ENCODE measurements at regions of chr14 and their contacts with region 1.

Region 1: GRCh38 chr14:55588259-55588699 is 8.3 kb downstream of the KTN1 start:
- DNase-seq: no peak
- CTCF ChIP-seq: no peak

Region 2: DNA sequence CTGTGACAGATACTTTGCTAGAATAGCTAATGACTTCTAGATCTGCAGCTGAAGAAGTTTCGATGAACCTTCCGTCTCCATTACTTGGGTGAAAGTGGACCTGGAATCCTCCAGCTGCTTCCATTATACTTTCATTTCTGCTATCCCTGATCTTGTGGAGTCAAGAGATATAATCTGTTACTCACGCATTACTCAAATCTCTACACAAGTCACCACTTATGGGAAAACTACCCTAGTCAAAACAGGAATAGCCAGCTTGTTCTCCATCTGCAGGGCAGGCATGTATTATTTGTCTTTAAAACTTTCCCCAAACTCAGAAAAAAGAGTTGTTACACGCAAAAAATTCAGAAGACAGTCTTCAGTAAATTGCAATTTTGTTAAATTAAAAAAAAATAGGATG is 11.1 kb before region 1 on chr14:
- CTCF ChIA-PET with region 1: interaction called, 10 read pairs
- POLR2A ChIA-PET with region 1: no interaction called
- DNase-seq: no peak
- CTCF ChIP-seq: no peak

Region 3: DNA sequence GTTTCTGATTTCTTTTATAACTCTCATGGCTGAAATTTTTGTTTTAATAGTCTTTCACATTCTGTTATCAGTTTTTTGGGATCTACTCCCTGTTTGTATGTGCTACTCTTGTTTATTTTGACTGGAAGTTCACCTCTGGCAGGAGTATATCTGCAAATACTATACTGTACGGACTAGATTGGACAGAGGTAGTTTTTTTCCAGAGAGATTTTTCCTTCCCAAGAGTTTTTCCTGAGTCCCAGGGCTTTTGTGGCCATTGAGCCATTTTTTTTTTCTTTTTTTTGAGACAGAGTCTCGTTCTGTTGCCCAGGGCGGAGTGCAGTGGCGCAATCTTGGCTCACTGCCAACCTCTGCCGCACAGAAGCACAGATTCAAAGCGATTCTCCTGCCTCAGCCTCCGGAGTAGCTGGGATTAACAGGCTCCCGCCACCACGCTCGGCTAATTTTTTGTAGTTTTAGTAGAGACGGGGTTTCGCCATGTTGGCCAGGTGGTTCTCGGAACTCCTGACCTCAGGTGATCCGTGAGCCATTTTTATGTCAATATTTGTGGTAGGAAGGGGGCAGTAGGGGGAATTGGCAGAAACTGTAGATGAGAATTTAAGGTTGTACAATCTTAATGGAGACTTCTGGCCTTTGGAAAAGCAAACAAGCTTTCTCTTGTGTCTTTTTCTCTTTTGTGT is 11.1 kb after region 1 on chr14:
- CTCF ChIA-PET with region 1: interaction called, 10 read pairs
- POLR2A ChIA-PET with region 1: no interaction called
- DNase-seq: no peak
- CTCF ChIP-seq: no peak